ENCODE measurements at regions of chr2 and their contacts with region 1.

Region 1: DNA sequence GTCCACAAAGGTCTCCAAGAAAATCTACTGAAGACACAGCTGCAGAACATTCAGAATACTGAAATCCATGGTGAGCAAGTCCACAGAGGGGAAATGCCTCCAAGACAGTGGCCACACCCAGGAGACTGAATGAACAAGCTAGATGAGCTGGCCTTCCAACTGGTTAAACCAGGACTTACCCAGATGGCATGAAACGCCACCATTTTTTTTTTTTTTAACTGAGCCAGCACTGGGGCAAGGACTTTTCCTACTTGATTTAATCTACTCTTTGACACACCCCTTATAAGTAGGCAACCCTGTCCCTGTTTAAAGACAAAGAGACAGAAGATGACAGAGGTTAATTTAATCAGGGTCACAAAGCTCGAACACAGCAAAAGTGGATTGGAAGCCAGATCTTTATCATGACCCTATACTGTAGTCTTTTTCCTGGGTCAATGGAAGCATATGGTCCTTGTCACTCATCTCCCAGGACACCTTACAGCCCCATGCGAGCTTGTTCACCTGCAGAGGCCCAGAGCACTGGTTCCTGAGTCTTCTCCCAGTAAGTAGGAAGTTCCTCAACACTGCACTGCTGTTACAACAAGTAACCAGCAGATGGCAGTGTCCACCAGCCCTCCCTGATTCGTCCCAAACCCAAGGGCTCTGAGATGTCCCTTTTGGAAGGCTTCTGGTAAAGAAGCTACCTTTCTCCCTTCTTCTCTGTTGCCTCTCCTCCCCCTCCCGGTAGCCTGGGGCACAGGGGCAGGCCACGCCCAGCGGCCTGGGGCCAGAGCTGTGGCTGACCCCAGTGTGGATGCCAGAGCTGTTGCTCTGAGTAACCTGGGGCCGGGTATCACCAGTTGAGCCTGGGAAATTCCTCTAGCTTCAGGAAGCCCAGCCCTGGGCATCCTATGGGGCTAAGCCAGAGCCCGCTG is 5.6 kb upstream of the GDF7 start:
- DNase-seq: peak; percentile 88
- H3K4me3 ChIP-seq: peak overlapping the region in 1 of 2 experiments; percentile 5; a peak in 1 of 4 replicates
- H3K27ac ChIP-seq: no peak overlapping the region
- H3K4me1 ChIP-seq: peaks cover 0 to 10% of the 10 kb centered on the region in 2 experiments; a peak in 2 of 4 replicates
- H3K27me3 ChIP-seq: peaks cover 71% of the 10 kb centered on the region
- CTCF ChIP-seq: peak; percentile 99
- EP300 ChIP-seq: 0 out of 4 replicates have a peak, but pooled peaks of 1 of the 2 experiments have one; percentile 23
- RAD21 ChIP-seq: peak; percentile 99

Region 2: GRCh38 chr2:20675701-20676352 is 14.5 kb after region 1 on chr2:
- CTCF ChIA-PET with region 1: interaction called, 232 read pairs
- POLR2A ChIA-PET with region 1: interaction called, 4 read pairs
- DNase-seq: no peak
- H3K4me3 ChIP-seq: no peak overlapping the region
- H3K27ac ChIP-seq: peak overlapping the region in 1 of 2 experiments; percentile 45; a peak in 1 of 4 replicates
- H3K4me1 ChIP-seq: peaks cover 5 to 12% of the 10 kb centered on the region in 2 experiments; a peak in 3 of 4 replicates
- H3K27me3 ChIP-seq: peaks cover 10% of the 10 kb centered on the region
- CTCF ChIP-seq: peak; percentile 5; the same call in 1 of the 2 replicates
- EP300 ChIP-seq: no peak
- RAD21 ChIP-seq: no peak

Region 3: DNA sequence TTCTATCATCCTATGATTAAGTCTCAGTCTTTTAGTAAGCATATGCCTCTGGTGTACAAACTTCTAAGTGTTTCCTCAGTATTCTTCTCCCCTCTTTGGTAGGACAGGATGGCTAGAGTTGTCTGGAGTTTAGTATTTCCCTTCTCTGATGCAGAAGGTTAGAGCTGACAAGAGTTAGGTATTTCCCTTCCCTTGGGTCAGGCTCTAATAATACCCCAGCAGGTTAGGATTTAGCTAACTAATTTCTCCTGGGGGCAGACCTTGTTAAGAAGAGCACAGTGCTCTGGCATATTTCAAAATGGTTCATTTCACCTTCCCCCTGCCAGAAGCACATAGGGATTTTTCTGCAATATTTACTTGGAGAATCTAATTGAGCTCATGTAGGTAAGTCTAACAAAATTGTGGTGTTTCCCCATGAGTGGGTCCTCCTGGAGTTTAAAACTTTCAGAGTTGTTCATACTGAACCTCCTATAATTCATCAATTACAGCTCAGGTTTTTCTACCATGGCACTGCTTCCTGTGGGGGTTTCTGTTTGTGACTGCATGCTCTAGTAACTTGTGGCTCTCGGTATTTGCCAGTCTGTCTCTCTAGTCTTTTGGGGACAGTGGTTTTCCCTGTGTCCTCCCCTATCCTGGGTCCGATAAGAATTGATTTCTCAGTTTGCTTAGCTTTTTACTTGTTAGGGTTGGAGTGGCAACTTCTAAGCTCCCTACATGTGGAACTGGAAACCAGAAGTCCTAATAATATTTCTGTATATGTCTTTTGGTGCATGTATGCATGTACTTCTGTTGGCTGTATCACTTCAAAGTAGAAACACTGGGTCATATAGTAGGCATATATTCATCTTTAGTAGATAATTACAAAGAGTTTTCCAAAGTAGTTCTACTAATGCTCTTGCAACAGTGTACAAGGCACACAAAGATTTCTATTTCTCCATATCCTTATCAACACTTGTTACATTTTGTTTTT is 83.3 kb after region 1 on chr2:
- CTCF ChIA-PET with region 1: interaction called, 20 read pairs
- POLR2A ChIA-PET with region 1: no interaction called
- DNase-seq: no peak
- H3K4me3 ChIP-seq: no peak overlapping the region
- H3K27ac ChIP-seq: no peak overlapping the region
- H3K4me1 ChIP-seq: peaks cover 0 to 9% of the 10 kb centered on the region in 2 experiments; a peak in 1 of 4 replicates
- H3K27me3 ChIP-seq: no peaks in the 10 kb centered on the region
- CTCF ChIP-seq: no peak
- EP300 ChIP-seq: no peak
- RAD21 ChIP-seq: no peak

Region 4: GRCh38 chr2:20916604-20917286 is 255.4 kb after region 1 on chr2:
- CTCF ChIA-PET with region 1: interaction called, 43 read pairs
- POLR2A ChIA-PET with region 1: no interaction called
- DNase-seq: peak; percentile 50
- H3K4me3 ChIP-seq: no peak overlapping the region
- H3K27ac ChIP-seq: peak overlapping the region in 1 of 2 experiments; percentile 47; a peak in 2 of 4 replicates
- H3K4me1 ChIP-seq: peaks cover 13 to 20% of the 10 kb centered on the region in 2 experiments; a peak in 3 of 4 replicates
- H3K27me3 ChIP-seq: no peaks in the 10 kb centered on the region; the same call in 1 of the 2 replicates
- CTCF ChIP-seq: peak; percentile 45
- EP300 ChIP-seq: no peak
- RAD21 ChIP-seq: peak; percentile 74

Region 5: GRCh38 chr2:20970068-20970467 is 308.7 kb after region 1 on chr2:
- CTCF ChIA-PET with region 1: interaction called, 427 read pairs
- POLR2A ChIA-PET with region 1: no interaction called
- DNase-seq: no peak
- H3K4me3 ChIP-seq: no peak overlapping the region
- H3K27ac ChIP-seq: no peak overlapping the region
- H3K4me1 ChIP-seq: no peaks in the 10 kb centered on the region; a peak in 1 of 4 replicates
- H3K27me3 ChIP-seq: peaks cover 14% of the 10 kb centered on the region; the same call in 1 of the 2 replicates
- CTCF ChIP-seq: no peak
- EP300 ChIP-seq: no peak
- RAD21 ChIP-seq: no peak

Region 6: GRCh38 chr2:21032338-21033236 is 371.3 kb after region 1 on chr2:
- CTCF ChIA-PET with region 1: interaction called, 38 read pairs
- POLR2A ChIA-PET with region 1: no interaction called
- DNase-seq: no peak
- H3K4me3 ChIP-seq: no peak overlapping the region
- H3K27ac ChIP-seq: no peak overlapping the region
- H3K4me1 ChIP-seq: no peaks in the 10 kb centered on the region
- H3K27me3 ChIP-seq: no peaks in the 10 kb centered on the region
- CTCF ChIP-seq: no peak
- EP300 ChIP-seq: no peak
- RAD21 ChIP-seq: no peak

Measured in SK-N-SH (cell line).